A673 (cell line): ENCODE measurements at regions of chr2 and their contacts with region 1.

Region 1: DNA sequence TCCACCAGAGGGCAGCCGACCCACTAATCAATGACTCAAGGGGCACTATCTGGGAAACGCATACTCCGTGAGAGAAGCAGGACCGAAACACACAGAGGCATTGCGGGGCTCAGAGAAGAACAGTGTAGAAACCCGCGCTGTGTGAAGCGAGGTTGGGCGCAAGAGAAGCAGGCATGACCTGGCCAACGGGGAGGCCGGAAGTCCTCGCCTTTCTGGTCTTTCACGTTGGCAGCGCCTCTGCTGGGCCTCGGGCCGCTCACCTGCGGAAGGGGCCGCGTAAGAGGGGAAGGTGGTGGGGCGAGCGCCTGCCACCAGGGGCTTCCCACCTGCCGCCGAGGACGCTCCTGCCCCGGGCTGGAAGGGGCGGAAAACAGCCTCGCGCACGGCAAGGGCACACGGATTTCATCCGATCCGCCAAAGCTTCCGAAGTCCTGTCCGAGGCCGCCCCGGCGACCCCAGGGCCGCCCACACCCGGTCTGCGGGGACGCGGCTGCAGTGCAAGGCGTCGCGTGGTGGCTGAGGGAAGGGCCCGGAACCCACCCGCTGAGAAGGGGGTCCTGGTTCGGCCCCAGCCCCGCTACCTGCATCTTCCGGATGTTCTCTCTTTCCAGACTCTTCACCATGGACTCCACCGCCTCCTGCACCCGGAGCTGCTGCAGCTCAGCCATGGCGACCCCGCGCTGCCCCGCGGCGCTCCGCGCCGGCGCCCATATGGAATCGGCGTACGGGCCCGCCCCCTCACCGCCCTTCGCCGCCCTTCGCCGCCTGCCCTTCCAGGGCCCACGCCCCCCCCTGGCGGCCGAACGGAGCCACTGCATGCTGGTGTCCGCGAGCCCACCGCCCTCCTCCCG is at the start of gene FAM136A:
- DNase-seq: peak; percentile 92
- H3K4me3 ChIP-seq: peak within 1 kb of the TSS; percentile 86
- H3K27ac ChIP-seq: peak within 1 kb of the TSS; percentile 85
- H3K4me1 ChIP-seq: peaks cover 13% of the 10 kb centered on the region
- H3K27me3 ChIP-seq: no peaks in the 10 kb centered on the region
- CTCF ChIP-seq: peak; percentile 85
- total RNA-seq, gene FAM136A: 71.6 and 77.7 TPM in 2 replicates

Region 2: GRCh38 chr2:69724540-69725159 is 576.9 kb before region 1 on chr2:
- CTCF ChIA-PET with region 1: interaction called, 6 read pairs
- POLR2A ChIA-PET with region 1: no interaction called
- intact Hi-C with region 1: loop called (anchors 2 kb)
- DNase-seq: peak; percentile 83
- H3K4me3 ChIP-seq: peak overlapping the region; percentile 18
- H3K27ac ChIP-seq: no peak overlapping the region
- H3K4me1 ChIP-seq: no peaks in the 10 kb centered on the region
- H3K27me3 ChIP-seq: no peaks in the 10 kb centered on the region
- CTCF ChIP-seq: peak; percentile 88

Region 3: DNA sequence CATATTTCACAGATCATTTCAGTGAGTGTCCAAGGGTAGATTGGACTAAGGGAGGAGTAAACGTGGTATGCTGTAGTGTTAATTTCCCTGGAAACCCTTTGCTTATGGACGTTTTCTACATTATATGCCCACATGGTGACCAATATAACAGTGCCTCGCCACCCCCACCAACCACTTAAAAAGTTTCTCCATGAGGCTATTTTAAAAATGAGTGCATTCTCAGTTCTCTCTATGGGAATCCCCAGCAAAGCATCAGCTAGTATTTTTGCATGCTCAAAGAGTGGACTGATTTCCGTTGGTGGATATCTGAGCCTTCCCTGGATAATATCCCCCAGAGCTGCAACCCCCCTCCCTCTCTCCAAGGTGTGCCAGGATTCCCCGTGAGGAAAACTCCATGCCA is 178.9 kb after region 1 on chr2:
- CTCF ChIA-PET with region 1: interaction called, 14 read pairs
- POLR2A ChIA-PET with region 1: interaction called, 4 read pairs
- intact Hi-C with region 1: no loop called
- DNase-seq: no peak
- H3K4me3 ChIP-seq: no peak overlapping the region
- H3K27ac ChIP-seq: no peak overlapping the region
- H3K4me1 ChIP-seq: no peaks in the 10 kb centered on the region
- H3K27me3 ChIP-seq: peaks cover 64% of the 10 kb centered on the region
- CTCF ChIP-seq: no peak

Region 4: GRCh38 chr2:70616168-70616694 is 314.7 kb after region 1 on chr2:
- CTCF ChIA-PET with region 1: interaction called, 45 read pairs
- POLR2A ChIA-PET with region 1: no interaction called
- intact Hi-C with region 1: loop called (anchors 2 kb)
- DNase-seq: no peak
- H3K4me3 ChIP-seq: no peak overlapping the region
- H3K27ac ChIP-seq: no peak overlapping the region
- H3K4me1 ChIP-seq: no peaks in the 10 kb centered on the region
- H3K27me3 ChIP-seq: peaks cover 15% of the 10 kb centered on the region
- CTCF ChIP-seq: no peak

Region 5: GRCh38 chr2:70789304-70790135 is 488.0 kb after region 1 on chr2:
- CTCF ChIA-PET with region 1: no interaction called
- POLR2A ChIA-PET with region 1: no interaction called
- intact Hi-C with region 1: loop called (anchors 10 kb)
- DNase-seq: peak; percentile 80
- H3K4me3 ChIP-seq: peak overlapping the region; percentile 36
- H3K27ac ChIP-seq: no peak overlapping the region
- H3K4me1 ChIP-seq: peaks cover 3% of the 10 kb centered on the region
- H3K27me3 ChIP-seq: peaks cover 39% of the 10 kb centered on the region
- CTCF ChIP-seq: peak; percentile 89